ENCODE measurements at regions of chr3 and their contacts with region 1.

Region 1: DNA sequence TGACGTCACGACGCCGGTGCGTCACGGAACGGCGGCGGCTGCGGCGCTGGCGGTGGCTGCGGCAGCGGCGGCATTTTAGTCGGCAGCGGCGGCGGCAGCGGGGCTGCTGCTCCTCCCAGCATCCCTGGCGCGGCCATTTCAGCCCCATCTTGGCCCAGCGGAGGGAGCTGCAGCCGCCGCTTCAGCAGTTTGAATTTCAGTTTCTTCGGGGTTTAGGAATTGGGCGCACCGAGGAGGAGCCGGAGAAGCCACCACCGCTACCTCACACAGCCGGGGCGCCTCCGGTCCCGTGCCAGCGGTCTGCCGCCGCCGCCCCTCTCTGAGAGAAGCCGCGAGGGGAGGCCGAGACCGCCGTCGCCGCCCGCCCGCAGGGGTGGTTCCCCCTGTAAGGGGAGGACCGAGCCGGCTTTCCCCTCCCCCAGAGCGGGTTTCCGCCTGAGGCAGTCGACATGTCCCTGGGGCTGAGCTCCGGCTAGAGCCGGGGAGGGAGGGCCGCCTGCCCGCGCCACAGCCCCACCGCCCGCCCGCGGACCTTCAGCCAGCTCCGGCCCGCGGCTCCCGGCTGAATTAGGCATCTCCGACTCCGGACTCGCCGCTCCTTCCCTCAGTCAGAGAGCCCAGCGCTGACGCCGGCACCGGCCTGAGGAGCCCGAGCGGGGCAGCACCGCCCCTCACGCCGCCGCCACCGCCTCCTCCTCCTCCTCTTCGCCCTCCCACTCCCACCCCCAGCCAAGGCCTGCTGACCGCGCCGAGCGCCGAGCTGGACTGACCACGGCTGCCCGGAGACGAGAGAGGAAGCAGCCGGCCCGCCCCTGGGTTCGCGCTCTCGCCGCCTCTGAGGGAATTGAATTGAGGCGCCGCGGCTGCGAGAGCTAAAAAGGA is at the start of gene TSC22D2:
- DNase-seq: peak; percentile 92 to 98 (median 96)
- H3K4me3 ChIP-seq: peak within 1 kb of the TSS; percentile 70 to 96 (median 88)
- H3K27ac ChIP-seq: peak within 1 kb of the TSS; percentile 94 to 100 (median 99)
- H3K27me3 ChIP-seq: no peaks in the 10 kb centered on the region
- CTCF ChIP-seq: peak in 34 of 56 donors; percentile 2 to 50 (median 25)
- total RNA-seq, gene TSC22D2: 32.6 to 65.1 (median 45.0) TPM

Region 2: DNA sequence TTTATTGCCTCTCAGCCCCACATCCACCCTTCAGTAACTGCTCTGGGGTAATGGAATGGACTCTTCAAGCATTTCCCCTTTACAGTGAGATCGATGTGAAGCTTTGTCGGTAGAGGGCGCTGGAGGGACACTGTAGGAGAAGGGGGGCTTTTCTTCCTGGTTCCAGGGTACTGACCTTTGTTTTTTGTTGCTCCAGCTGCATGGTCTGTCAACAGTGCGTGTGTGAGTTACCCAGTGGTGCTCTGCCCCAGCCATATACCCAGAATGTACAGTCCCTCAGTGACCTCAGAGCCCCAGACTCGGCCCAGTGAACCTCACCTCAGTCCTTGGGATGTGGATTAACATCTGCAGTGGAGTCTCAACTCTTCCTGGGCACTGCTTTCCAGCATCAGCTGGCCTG is 180.6 kb before region 1 on chr3:
- intact Hi-C with region 1: loop called (anchors 2 to 10 kb)
- DNase-seq: peak in 2 of 10 donors; percentile 44 to 63
- H3K4me3 ChIP-seq: no peak overlapping the region
- H3K27ac ChIP-seq: no peak overlapping the region
- H3K27me3 ChIP-seq: no peaks in the 10 kb centered on the region
- CTCF ChIP-seq: peak in 55 of 56 donors; percentile 20 to 79 (median 63)

Region 3: DNA sequence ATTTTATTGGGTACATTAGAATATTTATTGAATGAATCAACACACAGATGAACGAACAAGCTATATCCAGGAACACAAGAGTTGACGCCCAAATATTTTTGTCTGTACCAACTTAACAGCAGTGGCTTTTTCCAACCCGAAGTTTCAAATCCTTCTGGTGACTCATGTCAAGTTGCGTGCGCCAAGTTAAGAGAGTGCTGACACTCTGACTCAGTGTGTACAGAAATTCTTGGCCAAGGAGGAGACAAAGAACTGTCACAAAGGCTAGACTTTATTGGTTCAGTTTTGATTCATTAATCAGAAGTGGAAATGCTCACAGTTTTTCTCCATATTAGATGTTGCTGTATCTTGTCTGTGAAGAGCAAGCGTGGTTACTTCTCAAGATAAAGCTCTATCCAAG is 60.0 kb before region 1 on chr3:
- intact Hi-C with region 1: loop called (anchors 2 to 10 kb)
- DNase-seq: no peak
- H3K4me3 ChIP-seq: no peak overlapping the region
- H3K27ac ChIP-seq: peak overlapping the region in 2 of 59 donors; percentile 1 to 32
- H3K27me3 ChIP-seq: no peaks in the 10 kb centered on the region
- CTCF ChIP-seq: no peak

Region 4: DNA sequence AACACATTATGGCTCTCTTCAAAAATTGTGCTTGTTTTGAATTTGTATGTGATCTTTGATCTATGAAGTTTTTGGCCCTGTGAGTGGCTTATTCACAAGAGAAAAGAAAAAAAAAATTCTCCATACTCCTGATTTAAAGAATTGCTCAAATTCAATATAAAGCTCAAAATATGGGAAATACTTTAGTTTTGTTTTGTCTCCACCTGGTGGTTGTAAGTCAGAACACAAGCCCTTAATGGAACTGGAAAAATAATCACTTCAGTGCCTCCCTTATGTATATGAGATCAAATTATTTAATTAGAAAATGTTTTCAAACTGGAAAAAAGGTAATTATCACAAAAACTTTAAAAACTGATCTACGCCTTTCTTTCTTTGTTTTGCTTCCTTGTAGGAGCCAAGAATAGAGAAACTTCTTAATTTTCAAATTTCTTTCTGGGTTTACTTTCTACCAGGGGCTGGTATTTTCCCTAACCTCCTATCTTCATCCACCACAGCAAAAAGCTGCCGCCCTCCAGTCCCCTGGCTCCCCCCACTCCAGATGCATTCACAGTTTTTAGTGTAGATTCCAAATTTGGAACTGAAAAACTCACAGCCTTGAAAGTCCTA is 87.2 kb after region 1 on chr3:
- intact Hi-C with region 1: loop called (anchors 2 kb)
- DNase-seq: no peak
- H3K4me3 ChIP-seq: no peak overlapping the region
- H3K27ac ChIP-seq: no peak overlapping the region
- H3K27me3 ChIP-seq: no peaks in the 10 kb centered on the region
- CTCF ChIP-seq: peak; percentile 80 to 99 (median 90)

Region 5: DNA sequence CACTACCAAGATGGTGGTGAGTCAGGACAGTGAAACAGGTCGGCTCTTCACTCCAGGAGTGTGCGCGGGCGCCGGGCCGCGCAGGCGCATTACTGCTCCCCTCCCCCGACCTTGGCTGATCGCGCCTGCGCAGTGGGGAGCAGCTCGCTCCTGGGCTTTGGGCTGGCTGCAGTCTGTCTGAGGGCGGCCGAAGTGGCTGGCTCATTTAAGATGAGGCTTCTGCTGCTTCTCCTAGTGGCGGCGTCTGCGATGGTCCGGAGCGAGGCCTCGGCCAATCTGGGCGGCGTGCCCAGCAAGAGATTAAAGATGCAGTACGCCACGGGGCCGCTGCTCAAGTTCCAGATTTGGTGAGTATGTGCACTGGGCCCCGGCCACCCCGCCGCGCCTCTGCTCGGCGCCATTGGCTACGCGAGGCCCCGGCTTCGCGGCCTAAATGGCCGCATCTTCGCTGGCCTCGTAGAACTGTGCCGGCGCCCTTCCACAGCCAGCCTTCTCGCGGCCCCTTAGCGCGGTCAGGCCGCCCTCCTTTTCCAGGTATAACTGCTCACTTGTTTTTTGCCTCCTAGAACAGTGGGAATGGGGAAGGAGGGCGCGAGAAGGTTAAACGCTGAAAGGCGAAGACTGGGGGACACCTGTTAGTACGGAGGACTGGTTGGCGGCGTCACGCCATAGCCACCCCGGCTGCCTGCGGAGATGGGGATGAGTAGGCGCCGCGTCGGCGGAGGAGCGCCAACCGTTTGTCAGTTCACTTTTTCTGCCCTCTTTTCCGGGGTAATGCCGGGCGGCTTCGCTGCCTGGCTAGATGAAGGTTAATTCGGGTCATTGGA is 194.9 kb after region 1 on chr3 and contains the start of gene SELENOT:
- intact Hi-C with region 1: loop called in 1 of 2 experiments (anchors 10 kb)
- DNase-seq: peak; percentile 83 to 96 (median 90)
- H3K4me3 ChIP-seq: peak within 1 kb of the TSS; percentile 61 to 98 (median 84)
- H3K27ac ChIP-seq: peak within 1 kb of the TSS; percentile 82 to 99 (median 96)
- H3K27me3 ChIP-seq: no peaks in the 10 kb centered on the region
- CTCF ChIP-seq: peak in 39 of 56 donors; percentile 2 to 65 (median 35)
- total RNA-seq, gene SELENOT: 78.5 to 150 (median 109) TPM